Activated CD4-positive, alpha-beta T cell treated with anti-CD3 and anti-CD28 coated beads, Interleukin-2, amount 10 ng/mL, durations not matched to agents 7 days and 5 days (primary cell): ENCODE measurements at regions of chr5 and their contacts with region 1.

Region 1: DNA sequence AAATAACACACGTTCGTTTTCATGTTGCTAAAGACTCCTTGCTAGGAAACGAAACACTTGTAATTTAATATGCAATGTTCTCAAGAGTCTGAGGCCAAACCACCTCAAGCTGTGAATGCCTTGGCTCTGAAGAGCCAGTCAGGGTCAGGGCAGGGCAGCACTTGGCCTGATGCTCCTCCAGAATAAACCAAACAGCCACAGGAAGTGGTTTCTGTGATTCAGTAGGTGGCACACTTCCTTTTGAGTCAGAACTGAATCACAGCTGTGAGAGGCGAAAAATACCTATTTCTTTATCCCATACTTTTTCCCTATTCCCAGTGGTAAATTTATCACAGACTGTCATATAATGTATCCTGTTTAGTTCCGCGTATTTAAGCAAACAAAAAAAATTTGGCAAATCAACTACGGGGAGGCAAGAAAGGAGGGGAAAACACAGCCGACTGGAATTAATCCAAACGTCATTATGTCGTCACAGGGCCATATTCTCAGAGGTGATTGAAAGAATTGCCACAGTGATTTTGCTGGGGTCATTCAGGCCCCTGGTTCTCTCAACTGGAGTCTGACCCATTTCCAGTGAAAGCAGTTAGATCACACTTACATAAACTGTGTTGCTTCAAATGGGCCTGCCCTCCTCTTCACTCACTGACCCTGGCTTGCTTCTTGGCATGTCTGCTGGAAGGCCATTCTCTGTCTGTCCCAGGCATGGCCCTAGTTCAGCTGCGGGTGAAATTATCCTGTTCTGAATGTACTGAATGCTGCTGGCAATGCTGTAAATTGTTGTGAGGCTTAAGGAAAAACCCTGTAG is 71.2 kb downstream of the ARRDC3 start:
- DNase-seq: peak; percentile 78
- H3K4me3 Mint-ChIP-seq: peak overlapping the region; percentile 51
- H3K27ac Mint-ChIP-seq: peak overlapping the region; percentile 86
- H3K4me1 Mint-ChIP-seq: peaks cover 48% of the 10 kb centered on the region
- H3K27me3 Mint-ChIP-seq: no peaks in the 10 kb centered on the region

Region 2: DNA sequence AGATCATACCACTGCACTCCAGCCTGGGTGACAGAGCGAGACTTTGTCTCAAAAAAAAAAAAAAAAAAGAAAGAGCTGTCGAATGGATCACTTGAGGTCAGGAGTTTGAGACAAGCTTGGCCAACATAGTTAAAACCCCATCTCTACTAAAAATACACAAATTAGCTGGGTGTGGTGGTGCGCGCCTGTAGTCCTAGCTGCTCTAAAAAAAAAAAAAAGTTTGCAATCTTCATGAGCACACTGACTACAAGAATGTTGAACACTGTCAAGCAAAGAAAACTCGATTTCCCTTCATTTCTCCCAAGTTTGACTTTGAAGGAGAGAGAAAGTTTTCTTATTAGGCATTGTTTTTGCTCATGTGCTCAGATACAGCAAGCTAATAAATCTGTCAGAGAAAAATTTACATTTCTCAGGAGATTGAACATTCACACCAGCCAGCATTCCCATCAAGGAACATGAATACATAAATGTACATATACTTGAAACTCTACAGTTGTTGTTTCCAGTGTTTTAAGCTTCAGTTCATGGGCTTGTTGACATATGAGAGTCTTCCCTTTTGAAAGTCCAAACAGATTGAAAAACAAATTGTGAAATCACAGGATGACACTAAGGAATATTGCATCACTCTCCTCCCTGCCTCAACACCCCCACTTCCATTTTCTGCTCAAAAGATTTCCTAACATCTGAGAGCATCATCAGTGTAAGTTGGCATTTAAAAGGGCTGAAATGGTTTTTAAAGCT is 10.6 kb before region 1 on chr5:
- CTCF ChIA-PET with region 1: interaction called, 12 read pairs
- POLR2A ChIA-PET with region 1: no interaction called
- DNase-seq: no peak
- H3K4me3 Mint-ChIP-seq: no peak overlapping the region
- H3K27ac Mint-ChIP-seq: no peak overlapping the region
- H3K4me1 Mint-ChIP-seq: no peaks in the 10 kb centered on the region
- H3K27me3 Mint-ChIP-seq: no peaks in the 10 kb centered on the region